Thyroid gland (tissue), 4 donors: ENCODE measurements at regions of chr18 and their contacts with region 1.

Region 1: GRCh38 chr18:80056095-80056494 is 21.9 kb downstream of the RBFA start:
- DNase-seq: no peak
- H3K4me3 ChIP-seq: no peak overlapping the region
- H3K27ac ChIP-seq: no peak overlapping the region
- H3K4me1 ChIP-seq: no peaks in the 10 kb centered on the region
- H3K27me3 ChIP-seq: no peaks in the 10 kb centered on the region
- CTCF ChIP-seq: no peak
- POLR2A ChIP-seq: no peak

Region 2: GRCh38 chr18:79877214-79878091 is 178.6 kb before region 1 on chr18:
- intact Hi-C with region 1: no loop called
- DNase-seq: no peak
- H3K4me3 ChIP-seq: no peak overlapping the region
- H3K27ac ChIP-seq: no peak overlapping the region
- H3K4me1 ChIP-seq: no peaks in the 10 kb centered on the region
- H3K27me3 ChIP-seq: no peaks in the 10 kb centered on the region
- CTCF ChIP-seq: no peak
- POLR2A ChIP-seq: no peak

Region 3: GRCh38 chr18:80009661-80010550 is 46.2 kb before region 1 on chr18:
- intact Hi-C with region 1: loop called (anchors 10 kb)
- DNase-seq: peak; percentile 32 to 72
- H3K4me3 ChIP-seq: no peak overlapping the region
- H3K27ac ChIP-seq: peak overlapping the region in 1 of 3 donors; percentile 29
- H3K4me1 ChIP-seq: no peaks in the 10 kb centered on the region
- H3K27me3 ChIP-seq: no peaks in the 10 kb centered on the region
- CTCF ChIP-seq: no peak
- POLR2A ChIP-seq: no peak